B cell (primary cell): ENCODE measurements at regions of chr4 and their contacts with region 1.

Region 1: DNA sequence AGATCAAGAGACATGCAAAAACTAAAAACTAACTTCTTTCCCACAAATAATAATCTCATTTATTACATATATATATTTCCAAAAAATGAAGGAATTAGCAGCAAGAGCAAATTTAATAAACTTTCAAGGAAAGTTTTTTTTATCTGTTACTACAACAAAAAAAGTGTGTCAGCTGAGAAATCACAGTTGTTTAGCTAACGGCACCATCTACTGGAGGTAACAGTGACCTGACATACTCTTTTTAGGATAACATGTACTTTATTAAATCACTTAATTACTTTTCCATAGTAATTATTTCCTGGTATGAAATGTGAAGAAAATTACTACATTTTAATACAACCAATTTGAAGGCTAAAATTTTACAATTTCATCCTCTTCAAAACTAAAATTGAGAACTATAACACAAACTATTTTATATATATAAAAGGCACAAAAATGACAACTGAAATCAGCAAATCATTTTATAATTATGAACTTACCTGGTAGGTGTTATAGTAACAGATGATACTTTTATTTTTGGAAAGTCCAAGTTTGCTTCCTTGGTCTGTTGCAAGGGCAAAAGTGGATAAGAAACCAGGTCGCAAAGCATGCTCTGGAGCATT is 9.1 kb downstream of the LAMTOR3 start:
- DNase-seq: peak; percentile 68
- ATAC-seq: no peak
- H3K4me3 ChIP-seq: no peak overlapping the region
- H3K4me3 Mint-ChIP-seq: no peak overlapping the region
- H3K27ac ChIP-seq: no peak overlapping the region
- H3K27ac Mint-ChIP-seq: no peak overlapping the region
- H3K4me1 ChIP-seq: no peaks in the 10 kb centered on the region
- H3K4me1 Mint-ChIP-seq: peaks cover 2% of the 10 kb centered on the region
- H3K27me3 ChIP-seq: no peaks in the 10 kb centered on the region
- H3K27me3 Mint-ChIP-seq: no peaks in the 10 kb centered on the region
- CTCF ChIP-seq: peak; percentile 81

Region 2: GRCh38 chr4:99723612-99724011 is 161.6 kb before region 1 on chr4:
- CTCF ChIA-PET with region 1: no interaction called
- POLR2A ChIA-PET with region 1: no interaction called
- intact Hi-C with region 1: loop called (anchors 10 kb)
- DNase-seq: no peak
- ATAC-seq: no peak
- H3K4me3 ChIP-seq: no peak overlapping the region
- H3K4me3 Mint-ChIP-seq: no peak overlapping the region
- H3K27ac ChIP-seq: no peak overlapping the region
- H3K27ac Mint-ChIP-seq: no peak overlapping the region
- H3K4me1 ChIP-seq: no peaks in the 10 kb centered on the region
- H3K4me1 Mint-ChIP-seq: no peaks in the 10 kb centered on the region
- H3K27me3 ChIP-seq: no peaks in the 10 kb centered on the region
- H3K27me3 Mint-ChIP-seq: peaks cover 13% of the 10 kb centered on the region
- CTCF ChIP-seq: no peak

Region 3: GRCh38 chr4:99783940-99784339 is 101.2 kb before region 1 on chr4:
- CTCF ChIA-PET with region 1: no interaction called
- POLR2A ChIA-PET with region 1: no interaction called
- intact Hi-C with region 1: no loop called
- DNase-seq: no peak
- ATAC-seq: no peak
- H3K4me3 ChIP-seq: no peak overlapping the region
- H3K4me3 Mint-ChIP-seq: no peak overlapping the region
- H3K27ac ChIP-seq: no peak overlapping the region
- H3K27ac Mint-ChIP-seq: no peak overlapping the region
- H3K4me1 ChIP-seq: no peaks in the 10 kb centered on the region
- H3K4me1 Mint-ChIP-seq: no peaks in the 10 kb centered on the region
- H3K27me3 ChIP-seq: no peaks in the 10 kb centered on the region
- H3K27me3 Mint-ChIP-seq: peaks cover 20% of the 10 kb centered on the region
- CTCF ChIP-seq: no peak